Posterior cingulate gyrus (tissue), 11 donors: ENCODE measurements at regions of chr5 and their contacts with region 1.

Region 1: GRCh38 chr5:28344803-28345433 is 1306.5 kb upstream of the CDH9 start:
- DNase-seq: no peak

Region 2: DNA sequence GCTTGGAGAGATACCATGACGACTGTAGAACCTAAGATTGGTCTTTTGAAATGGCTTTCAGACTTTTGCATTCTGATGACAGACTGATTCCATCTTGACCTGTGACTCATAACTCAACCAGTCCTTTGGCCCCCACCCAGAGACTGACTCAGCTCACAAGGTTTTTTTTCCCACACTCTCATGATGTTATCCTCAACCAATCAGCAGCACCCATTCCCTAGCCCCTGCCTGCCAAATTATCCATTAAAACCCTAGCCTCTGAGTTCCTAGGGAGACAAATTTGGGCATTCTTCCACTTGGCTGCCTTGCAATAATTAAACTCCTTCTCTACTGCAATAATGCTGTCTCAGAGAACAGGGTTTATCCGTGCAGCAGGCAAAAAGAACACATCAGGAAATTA is 43.2 kb before region 1 on chr5:
- intact Hi-C with region 1: no loop called
- DNase-seq: no peak

Region 3: DNA sequence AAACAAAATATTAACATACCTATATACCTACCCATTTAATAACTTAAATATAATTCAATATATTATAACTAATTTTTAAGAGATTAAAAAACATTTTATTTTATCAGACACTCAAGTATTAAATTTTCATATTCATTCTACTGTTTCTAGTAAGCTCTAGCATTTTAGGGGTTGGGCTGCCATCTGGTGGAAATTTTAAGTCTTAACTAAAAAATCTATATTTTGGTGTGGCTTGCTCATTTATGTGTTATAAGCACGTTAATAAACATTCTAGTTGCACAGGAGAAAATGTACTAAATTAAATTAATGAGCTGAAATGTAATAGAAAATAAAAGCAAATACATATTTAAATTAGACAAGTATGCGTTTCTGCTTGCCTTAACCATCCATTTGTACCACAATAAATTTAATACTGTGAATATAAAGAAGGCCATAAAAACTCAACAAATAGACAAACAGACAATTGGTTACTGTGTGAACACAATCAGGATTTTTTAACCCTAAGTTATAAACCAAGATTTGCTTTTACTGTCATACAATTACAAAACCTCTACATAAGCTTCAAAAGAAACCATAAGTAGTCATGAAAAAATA is 421.7 kb after region 1 on chr5:
- intact Hi-C with region 1: loop called (anchors 10 kb)
- DNase-seq: no peak